Breast epithelium (tissue), 4 donors: ENCODE measurements at regions of chr5 and their contacts with region 1.

Region 1: GRCh38 chr5:126544087-126544740 is 50.8 kb downstream of the ALDH7A1 start:
- DNase-seq: no peak
- H3K4me3 ChIP-seq: no peak overlapping the region
- H3K27ac ChIP-seq: no peak overlapping the region
- H3K4me1 ChIP-seq: no peaks in the 10 kb centered on the region
- H3K27me3 ChIP-seq: no peaks in the 10 kb centered on the region
- CTCF ChIP-seq: peak in 2 of 3 donors; percentile 10 to 29
- POLR2A ChIP-seq: no peak

Region 2: GRCh38 chr5:126354012-126354857 is 190.0 kb before region 1 on chr5:
- intact Hi-C with region 1: loop called (anchors 5 kb)
- DNase-seq: no peak
- H3K4me3 ChIP-seq: peak overlapping the region in 1 of 3 donors; percentile 48
- H3K27ac ChIP-seq: peak overlapping the region; percentile 78 to 80
- H3K4me1 ChIP-seq: peaks cover 0 to 9% of the 10 kb centered on the region in 2 donors
- H3K27me3 ChIP-seq: no peaks in the 10 kb centered on the region
- CTCF ChIP-seq: peak in 2 of 3 donors; percentile 55 to 58
- POLR2A ChIP-seq: no peak

Region 3: DNA sequence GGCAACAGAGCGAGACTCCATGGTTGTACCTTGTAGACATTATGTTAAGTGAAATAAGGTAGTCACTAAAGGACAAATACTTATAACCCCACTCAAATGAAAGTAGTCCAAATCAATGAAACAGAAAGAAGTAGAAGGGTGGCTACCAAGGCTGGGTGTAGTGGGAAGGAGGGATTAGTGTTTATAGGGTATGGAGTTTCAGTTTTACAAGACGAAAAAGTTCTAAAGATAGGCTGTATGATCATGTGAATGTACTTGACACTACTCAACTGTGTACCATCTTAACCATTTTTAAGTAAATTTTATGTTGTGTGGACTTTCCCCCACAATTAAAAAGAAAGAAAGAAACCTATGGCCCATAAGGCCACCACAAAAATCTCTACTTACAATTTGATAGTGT is 18.6 kb after region 1 on chr5:
- intact Hi-C with region 1: no loop called
- DNase-seq: no peak
- H3K4me3 ChIP-seq: no peak overlapping the region
- H3K27ac ChIP-seq: no peak overlapping the region
- H3K4me1 ChIP-seq: no peaks in the 10 kb centered on the region
- H3K27me3 ChIP-seq: no peaks in the 10 kb centered on the region
- CTCF ChIP-seq: no peak
- POLR2A ChIP-seq: no peak